Endothelial cell of umbilical vein (primary cell): ENCODE measurements at regions of chr10 and their contacts with region 1.

Region 1: DNA sequence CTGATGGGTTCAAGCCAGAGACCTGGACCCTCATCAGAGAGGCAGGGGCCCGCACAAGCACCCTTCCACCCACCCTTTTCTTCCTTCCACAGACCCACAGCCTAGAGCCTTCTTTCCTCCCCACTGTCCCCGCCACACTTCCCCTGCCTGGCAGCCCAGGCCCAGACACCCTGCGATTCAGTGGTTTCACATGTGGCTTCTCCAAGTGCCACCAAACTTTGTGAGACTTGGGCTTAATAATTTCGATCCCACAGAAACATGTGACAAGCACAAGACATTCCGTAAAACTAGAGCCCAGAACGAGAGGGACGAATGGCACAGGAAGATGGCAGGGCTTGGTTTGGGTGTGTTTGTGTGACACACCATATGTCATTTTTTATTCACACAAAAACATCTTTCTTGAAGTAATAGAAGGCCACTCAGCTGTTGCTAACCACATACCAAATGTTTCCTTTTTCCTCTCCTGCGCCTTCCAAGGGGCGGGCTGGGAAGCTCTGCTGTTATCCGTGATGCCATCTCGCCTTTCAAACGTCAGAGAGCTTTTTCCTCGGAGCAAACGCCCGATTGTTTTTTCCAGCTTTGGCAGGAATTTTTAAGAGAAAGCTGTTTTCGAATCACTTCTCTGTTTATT is 162.9 kb downstream of the GRK5 start:
- DNase-seq: peak; percentile 92
- H3K4me3 ChIP-seq: peak overlapping the region in 2 of 3 experiments; percentile 11 to 68
- H3K27ac ChIP-seq: peak overlapping the region; percentile 98
- H3K4me1 ChIP-seq: peaks cover 43% of the 10 kb centered on the region
- H3K27me3 ChIP-seq: no peaks in the 10 kb centered on the region
- CTCF ChIP-seq: no peak
- POLR2A ChIP-seq: no peak

Region 2: DNA sequence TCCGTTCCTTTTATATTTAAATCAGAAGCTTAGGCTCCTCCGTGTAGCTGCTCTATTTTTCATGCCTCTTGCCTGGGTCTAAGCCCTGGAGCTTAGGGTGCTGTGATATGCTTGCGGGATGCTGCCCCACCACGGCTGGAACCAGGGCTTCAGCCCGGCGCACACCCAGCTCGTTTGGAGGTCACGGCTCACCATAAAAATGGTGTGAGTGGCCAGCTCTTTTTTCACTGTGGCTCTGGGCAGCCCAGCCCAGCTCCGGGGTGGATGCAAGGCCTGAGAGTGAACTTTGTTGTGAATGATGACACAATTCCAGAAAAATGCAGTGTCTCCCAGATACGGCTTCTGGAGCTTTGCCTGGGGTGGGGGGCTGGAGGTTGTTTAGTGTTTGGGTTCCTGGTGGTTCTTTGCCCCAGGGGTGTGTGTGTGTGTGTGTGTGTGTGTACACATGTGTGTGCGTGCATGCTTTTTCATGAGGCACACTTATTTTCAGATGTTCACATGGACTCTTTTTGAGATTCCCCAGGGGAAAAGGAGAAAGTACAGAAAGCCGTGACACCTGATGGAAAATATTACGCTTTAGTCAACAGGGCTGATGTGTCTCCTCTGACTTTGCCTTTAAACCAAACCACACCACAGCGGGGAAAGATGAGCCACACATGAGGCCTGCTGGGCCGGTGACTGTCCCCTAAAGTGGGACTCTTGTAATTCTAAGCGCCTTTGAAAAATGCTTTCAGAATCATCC is 116.6 kb before region 1 on chr10:
- CTCF ChIA-PET with region 1: no interaction called
- POLR2A ChIA-PET with region 1: no interaction called
- dilution Hi-C with region 1: no loop called
- intact Hi-C with region 1: loop called (anchors 2 kb)
- DNase-seq: peak; percentile 73
- H3K4me3 ChIP-seq: no peak overlapping the region
- H3K27ac ChIP-seq: peak overlapping the region; percentile 35
- H3K4me1 ChIP-seq: peaks cover 46% of the 10 kb centered on the region
- H3K27me3 ChIP-seq: no peaks in the 10 kb centered on the region
- CTCF ChIP-seq: no peak
- POLR2A ChIP-seq: no peak

Region 3: DNA sequence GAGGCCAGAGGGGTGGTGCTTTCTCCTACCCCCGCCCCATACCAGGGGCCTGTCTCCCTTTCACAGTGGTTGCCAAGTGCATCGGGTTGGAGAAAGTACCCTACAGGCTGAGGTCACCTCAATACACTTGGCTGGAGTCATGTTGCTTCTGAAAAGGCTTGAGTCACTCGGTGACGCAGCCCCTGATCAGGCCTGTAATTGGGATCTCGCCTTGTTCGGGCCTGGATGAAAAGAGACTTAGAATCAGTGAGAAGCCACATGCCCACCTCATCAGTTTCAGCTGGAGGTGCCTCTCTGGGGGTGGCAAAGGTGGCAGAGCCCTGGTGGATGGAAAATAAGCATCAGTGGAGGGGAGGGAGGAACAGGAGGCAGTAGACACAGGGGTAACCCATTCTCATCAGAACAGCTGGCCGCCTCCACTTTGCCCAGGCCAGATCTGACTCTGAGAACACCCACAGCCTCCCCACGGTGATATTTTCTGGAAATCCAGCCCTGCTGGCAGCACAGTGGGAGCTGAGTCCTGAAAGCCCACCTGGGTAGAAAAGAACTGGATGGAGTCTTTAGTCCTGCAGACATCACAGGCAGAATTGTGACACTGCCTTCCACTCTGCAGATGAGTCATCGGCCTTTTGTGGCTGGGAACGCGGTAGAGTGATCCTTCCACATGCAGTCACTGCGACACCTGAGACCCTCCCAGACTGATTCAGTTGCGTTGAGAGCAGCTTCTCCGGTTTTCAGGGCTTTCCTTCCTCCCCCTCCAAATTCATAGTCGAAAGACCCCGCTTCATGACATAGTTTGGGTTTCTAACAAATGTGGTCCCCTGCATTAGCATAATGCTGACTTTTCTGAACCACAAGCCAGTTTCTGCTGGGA is 54.9 kb before region 1 on chr10:
- CTCF ChIA-PET with region 1: no interaction called
- POLR2A ChIA-PET with region 1: no interaction called
- dilution Hi-C with region 1: no loop called
- intact Hi-C with region 1: loop called (anchors 1 kb)
- DNase-seq: peak; percentile 57
- H3K4me3 ChIP-seq: no peak overlapping the region
- H3K27ac ChIP-seq: peak overlapping the region; percentile 94
- H3K4me1 ChIP-seq: peaks cover 35% of the 10 kb centered on the region
- H3K27me3 ChIP-seq: no peaks in the 10 kb centered on the region
- CTCF ChIP-seq: no peak
- POLR2A ChIP-seq: no peak

Region 4: GRCh38 chr10:119341459-119342301 is 28.5 kb before region 1 on chr10:
- CTCF ChIA-PET with region 1: interaction called, 9 read pairs
- POLR2A ChIA-PET with region 1: no interaction called
- dilution Hi-C with region 1: no loop called
- intact Hi-C with region 1: loop called (anchors 1 kb)
- DNase-seq: peak; percentile 44
- H3K4me3 ChIP-seq: no peak overlapping the region
- H3K27ac ChIP-seq: no peak overlapping the region
- H3K4me1 ChIP-seq: peaks cover 21% of the 10 kb centered on the region
- H3K27me3 ChIP-seq: no peaks in the 10 kb centered on the region
- CTCF ChIP-seq: no peak
- POLR2A ChIP-seq: no peak

Region 5: GRCh38 chr10:119409866-119410299 is 39.7 kb after region 1 on chr10:
- CTCF ChIA-PET with region 1: interaction called, 6 read pairs
- POLR2A ChIA-PET with region 1: interaction called, 14 read pairs
- dilution Hi-C with region 1: no loop called
- intact Hi-C with region 1: loop called (anchors 1 kb)
- DNase-seq: peak; percentile 94
- H3K4me3 ChIP-seq: no peak overlapping the region
- H3K27ac ChIP-seq: peak overlapping the region; percentile 85
- H3K4me1 ChIP-seq: peaks cover 44% of the 10 kb centered on the region
- H3K27me3 ChIP-seq: no peaks in the 10 kb centered on the region
- CTCF ChIP-seq: no peak
- POLR2A ChIP-seq: peak; percentile 66